IMR-90 (cell line): ENCODE measurements at regions of chr7 and their contacts with region 1.

Region 1: GRCh38 chr7:101815835-101816493 is 1.5 kb upstream of the CUX1 start:
- DNase-seq: peak; percentile 79
- ATAC-seq: peak; percentile 74
- H3K4me3 ChIP-seq: peak overlapping the region; percentile 68
- H3K27ac ChIP-seq: peak overlapping the region; percentile 53
- H3K4me1 ChIP-seq: peaks cover 9% of the 10 kb centered on the region
- H3K27me3 ChIP-seq: no peaks in the 10 kb centered on the region
- CTCF ChIP-seq: no peak
- POLR2A ChIP-seq: peak; percentile 53
- RAD21 ChIP-seq: peak; percentile 33

Region 2: DNA sequence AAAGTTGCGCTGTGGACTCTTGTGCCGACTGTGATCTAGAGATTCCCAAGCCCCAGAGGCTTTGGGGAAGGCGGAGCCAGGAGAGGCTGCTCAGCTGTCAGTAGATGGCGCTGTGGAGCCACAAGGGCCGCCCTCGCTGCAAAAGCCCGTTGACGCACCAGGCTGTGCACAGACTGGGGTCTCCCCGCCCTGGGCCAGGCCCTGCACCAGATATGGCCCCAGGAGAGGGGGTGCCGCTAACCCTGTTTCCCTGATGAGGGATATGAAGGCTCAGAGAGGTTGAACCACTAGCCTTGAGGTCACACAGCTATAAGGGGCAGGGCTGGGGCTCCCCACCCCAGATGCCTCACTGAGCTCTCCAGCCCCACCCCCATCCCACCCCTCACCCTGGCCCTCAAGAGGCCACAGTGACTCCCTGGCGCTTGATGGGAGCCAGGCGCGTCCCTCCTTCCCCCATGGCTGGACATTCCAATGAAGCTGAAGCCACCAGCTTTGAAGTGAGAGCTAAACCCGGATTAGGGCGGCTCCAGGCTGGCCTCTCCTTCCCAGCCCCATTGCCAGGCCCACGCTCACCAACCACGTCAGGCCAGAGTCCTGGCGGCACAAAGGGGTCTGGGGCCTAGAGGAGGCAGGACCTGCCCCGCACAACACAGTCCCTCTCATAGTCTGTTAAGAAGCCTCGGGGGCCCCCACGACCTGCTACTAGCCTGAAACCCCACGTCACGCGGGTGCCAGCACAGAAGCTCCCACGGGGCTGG is 213.3 kb before region 1 on chr7:
- CTCF ChIA-PET with region 1: interaction called, 3 read pairs
- POLR2A ChIA-PET with region 1: no interaction called
- dilution Hi-C with region 1: no loop called
- in situ Hi-C with region 1: no loop called
- intact Hi-C with region 1: loop called (anchors 1 kb)
- DNase-seq: peak; percentile 67
- ATAC-seq: peak; percentile 99
- H3K4me3 ChIP-seq: no peak overlapping the region
- H3K27ac ChIP-seq: no peak overlapping the region
- H3K4me1 ChIP-seq: no peaks in the 10 kb centered on the region
- H3K27me3 ChIP-seq: peaks cover 11% of the 10 kb centered on the region; the same call in 1 of the 2 replicates
- CTCF ChIP-seq: peak; percentile 95
- POLR2A ChIP-seq: no peak
- RAD21 ChIP-seq: peak; percentile 92

Region 3: DNA sequence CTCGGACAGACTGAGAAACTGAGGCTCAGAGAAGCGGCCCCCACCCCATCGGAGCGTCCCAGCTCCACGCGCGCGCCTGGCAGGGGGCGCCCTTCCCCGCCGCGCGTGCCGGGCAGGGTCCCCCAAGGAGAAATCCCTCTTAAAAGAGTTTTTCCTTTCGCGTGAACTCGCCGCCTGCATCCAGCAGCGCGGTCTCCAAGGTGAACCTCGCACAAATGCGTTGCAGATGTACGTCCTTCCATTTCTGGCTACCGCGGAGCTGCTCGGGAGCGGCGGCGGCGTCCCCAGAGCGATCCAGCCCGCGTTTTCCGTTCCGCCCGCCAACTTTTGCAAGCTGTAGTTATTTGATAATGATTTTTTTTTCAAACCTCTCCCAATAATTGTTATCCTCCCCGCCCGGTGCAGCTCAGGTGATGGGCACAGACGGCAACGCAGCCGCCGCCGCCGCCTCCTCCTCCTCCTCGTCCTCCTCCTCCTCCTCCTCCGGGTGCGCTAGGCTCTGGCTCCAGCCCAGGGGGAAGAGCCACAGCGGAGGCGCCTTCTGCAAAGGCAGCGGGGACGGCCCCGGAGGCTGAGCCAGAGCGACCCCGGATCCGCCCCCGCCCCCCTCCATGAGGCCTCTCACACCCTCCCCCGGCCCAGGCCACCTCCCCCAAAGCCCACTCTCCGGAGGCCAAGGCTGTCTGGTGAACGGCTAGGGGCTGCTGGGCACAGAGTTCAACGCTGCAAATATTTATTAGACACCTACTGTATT is 72.5 kb before region 1 on chr7:
- CTCF ChIA-PET with region 1: no interaction called
- POLR2A ChIA-PET with region 1: no interaction called
- dilution Hi-C with region 1: no loop called
- in situ Hi-C with region 1: no loop called
- intact Hi-C with region 1: loop called (anchors 2 kb)
- DNase-seq: peak; percentile 49
- ATAC-seq: peak; percentile 79
- H3K4me3 ChIP-seq: peak overlapping the region; percentile 44
- H3K27ac ChIP-seq: no peak overlapping the region
- H3K4me1 ChIP-seq: peaks cover 3% of the 10 kb centered on the region; the same call in 1 of the 2 replicates
- H3K27me3 ChIP-seq: peaks cover 38% of the 10 kb centered on the region
- CTCF ChIP-seq: peak; percentile 41
- POLR2A ChIP-seq: no peak
- RAD21 ChIP-seq: no peak; the same call in 1 of the 2 replicates

Region 4: DNA sequence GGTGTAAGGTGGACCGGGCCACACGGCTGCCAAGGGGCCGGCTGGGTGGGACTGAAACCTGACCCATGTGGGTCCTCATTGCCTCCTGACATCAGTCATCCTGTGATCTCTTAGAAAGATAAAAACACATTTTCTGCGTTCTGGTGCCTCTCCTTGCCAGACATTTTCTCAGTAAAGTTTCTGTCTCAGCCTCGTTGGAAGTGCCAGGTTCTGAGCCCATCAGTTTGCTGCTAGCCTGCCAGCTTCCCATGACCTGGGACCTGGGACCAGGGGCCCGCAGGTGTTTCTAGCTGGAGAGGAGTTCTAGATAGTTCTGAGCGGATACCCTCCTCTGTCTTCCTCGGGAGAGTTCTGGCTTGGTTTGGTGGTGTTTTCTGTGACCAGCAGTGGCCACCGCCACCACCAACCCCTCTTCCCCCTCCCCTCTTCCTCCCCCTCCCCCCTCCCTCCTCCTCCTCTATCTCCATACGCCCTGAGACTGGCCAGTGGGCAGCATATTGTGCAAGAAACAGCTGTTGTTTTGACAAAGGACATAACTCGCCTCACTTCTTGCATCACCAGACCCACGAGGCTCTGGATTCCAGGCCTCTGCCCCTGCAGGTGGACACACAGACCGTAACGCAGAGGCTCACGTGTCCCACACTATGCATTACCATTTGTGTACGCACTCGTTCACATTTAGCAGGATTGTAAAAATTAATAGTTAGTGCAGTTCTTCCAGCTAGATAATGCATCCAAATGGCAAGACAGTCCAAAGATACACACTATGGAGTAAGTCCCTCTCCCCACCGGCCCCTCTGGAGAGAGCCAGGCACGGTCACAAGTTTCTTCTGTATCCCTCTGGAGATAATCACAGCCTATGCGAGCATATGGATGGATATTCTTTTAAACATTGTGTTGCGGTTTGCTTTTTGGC is 96.1 kb after region 1 on chr7:
- CTCF ChIA-PET with region 1: no interaction called
- POLR2A ChIA-PET with region 1: no interaction called
- dilution Hi-C with region 1: no loop called
- in situ Hi-C with region 1: no loop called
- intact Hi-C with region 1: loop called (anchors 5 kb)
- DNase-seq: peak; percentile 93
- ATAC-seq: peak; percentile 70
- H3K4me3 ChIP-seq: no peak overlapping the region
- H3K27ac ChIP-seq: peak overlapping the region; percentile 86; the same call in 1 of the 2 replicates
- H3K4me1 ChIP-seq: peaks cover 31% of the 10 kb centered on the region
- H3K27me3 ChIP-seq: no peaks in the 10 kb centered on the region
- CTCF ChIP-seq: no peak
- POLR2A ChIP-seq: no peak
- RAD21 ChIP-seq: no peak

Region 5: DNA sequence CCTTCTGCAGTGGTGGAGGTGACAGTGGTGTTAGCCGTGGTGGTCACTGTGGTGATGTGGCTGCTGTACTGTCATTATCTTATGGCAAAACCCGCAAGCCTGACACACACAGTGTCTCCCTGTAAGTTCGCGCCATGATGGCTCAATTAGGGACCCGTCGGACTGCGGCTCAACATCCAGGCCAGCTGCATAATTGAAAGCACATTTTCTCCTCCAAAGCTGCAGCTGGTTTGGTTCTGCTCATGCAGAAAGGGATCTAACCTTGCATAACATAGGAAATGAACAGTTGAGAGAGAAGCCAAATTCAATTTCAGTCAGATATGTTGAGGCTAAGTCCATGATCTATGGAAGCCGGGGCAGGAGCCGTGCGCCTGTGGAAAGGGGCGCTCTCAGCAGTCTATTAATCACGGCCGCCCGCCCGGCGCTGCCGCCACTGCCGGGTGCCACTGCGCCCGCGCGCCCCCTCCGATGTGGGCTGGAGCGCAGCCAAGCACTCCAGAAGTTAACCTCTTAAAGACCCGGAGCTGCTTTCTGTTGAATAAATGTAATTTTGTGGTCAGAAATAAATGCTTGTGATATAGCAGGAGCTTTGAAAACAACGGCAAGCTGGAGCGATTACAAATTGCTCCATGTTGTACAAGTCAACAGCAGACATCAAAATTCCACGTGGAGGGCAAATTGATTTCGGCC is 229.2 kb after region 1 on chr7:
- CTCF ChIA-PET with region 1: no interaction called
- POLR2A ChIA-PET with region 1: no interaction called
- dilution Hi-C with region 1: no loop called
- in situ Hi-C with region 1: no loop called
- intact Hi-C with region 1: loop called (anchors 10 kb)
- DNase-seq: peak; percentile 93
- ATAC-seq: peak; percentile 90
- H3K4me3 ChIP-seq: no peak overlapping the region
- H3K27ac ChIP-seq: peak overlapping the region; percentile 41
- H3K4me1 ChIP-seq: peaks cover 18% of the 10 kb centered on the region
- H3K27me3 ChIP-seq: no peaks in the 10 kb centered on the region
- CTCF ChIP-seq: no peak
- POLR2A ChIP-seq: no peak
- RAD21 ChIP-seq: no peak

Region 6: GRCh38 chr7:102272075-102272917 is 456.3 kb after region 1 on chr7:
- CTCF ChIA-PET with region 1: no interaction called
- POLR2A ChIA-PET with region 1: no interaction called
- dilution Hi-C with region 1: no loop called
- in situ Hi-C with region 1: no loop called
- intact Hi-C with region 1: loop called (anchors 1 kb)
- DNase-seq: peak; percentile 81
- ATAC-seq: peak; percentile 89
- H3K4me3 ChIP-seq: no peak overlapping the region
- H3K27ac ChIP-seq: no peak overlapping the region
- H3K4me1 ChIP-seq: peaks cover 12% of the 10 kb centered on the region
- H3K27me3 ChIP-seq: no peaks in the 10 kb centered on the region
- CTCF ChIP-seq: peak; percentile 94
- POLR2A ChIP-seq: no peak
- RAD21 ChIP-seq: peak; percentile 94

Region 7: DNA sequence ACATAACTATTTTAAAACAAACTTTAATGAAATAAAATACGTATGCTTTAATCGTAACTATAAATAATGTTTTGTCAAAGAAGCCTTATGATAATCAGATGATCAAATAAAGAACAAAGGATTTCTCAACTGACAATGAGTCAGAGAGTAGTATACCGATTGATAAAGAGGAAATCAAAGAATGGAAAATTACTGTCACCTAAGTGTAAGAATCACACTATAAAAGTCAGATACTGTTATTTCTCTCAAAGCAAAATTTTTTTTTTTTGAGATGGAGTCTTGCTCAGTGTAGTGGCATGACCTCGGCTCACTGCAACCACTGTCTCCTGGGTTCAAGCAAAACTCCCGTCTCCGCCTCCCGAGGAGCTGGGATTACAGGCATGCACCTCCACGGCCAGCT is 1509.8 kb after region 1 on chr7:
- CTCF ChIA-PET with region 1: no interaction called
- POLR2A ChIA-PET with region 1: no interaction called
- dilution Hi-C with region 1: no loop called
- in situ Hi-C with region 1: no loop called
- intact Hi-C with region 1: no loop called
- DNase-seq: no peak
- ATAC-seq: no peak
- H3K4me3 ChIP-seq: no peak overlapping the region
- H3K27ac ChIP-seq: no peak overlapping the region
- H3K4me1 ChIP-seq: no peaks in the 10 kb centered on the region
- H3K27me3 ChIP-seq: no peaks in the 10 kb centered on the region
- CTCF ChIP-seq: no peak
- POLR2A ChIP-seq: no peak
- RAD21 ChIP-seq: no peak